Natural killer cell (primary cell): ENCODE measurements at regions of chr3 and their contacts with region 1.

Region 1: GRCh38 chr3:143182866-143183664 is 63.5 kb downstream of the CHST2 start:
- DNase-seq: no peak
- ATAC-seq: peak; percentile 60 to 72 (median 63)
- H3K4me3 ChIP-seq: no peak overlapping the region
- H3K4me3 Mint-ChIP-seq: peak overlapping the region; percentile 64
- H3K27ac ChIP-seq: peak overlapping the region; percentile 68
- H3K27ac Mint-ChIP-seq: no peak overlapping the region
- H3K4me1 ChIP-seq: peaks cover 11% of the 10 kb centered on the region
- H3K4me1 Mint-ChIP-seq: peaks cover 29 to 34% of the 10 kb centered on the region in 2 donors
- H3K27me3 ChIP-seq: no peaks in the 10 kb centered on the region
- H3K27me3 Mint-ChIP-seq: no peaks in the 10 kb centered on the region
- CTCF ChIP-seq: no peak

Region 2: DNA sequence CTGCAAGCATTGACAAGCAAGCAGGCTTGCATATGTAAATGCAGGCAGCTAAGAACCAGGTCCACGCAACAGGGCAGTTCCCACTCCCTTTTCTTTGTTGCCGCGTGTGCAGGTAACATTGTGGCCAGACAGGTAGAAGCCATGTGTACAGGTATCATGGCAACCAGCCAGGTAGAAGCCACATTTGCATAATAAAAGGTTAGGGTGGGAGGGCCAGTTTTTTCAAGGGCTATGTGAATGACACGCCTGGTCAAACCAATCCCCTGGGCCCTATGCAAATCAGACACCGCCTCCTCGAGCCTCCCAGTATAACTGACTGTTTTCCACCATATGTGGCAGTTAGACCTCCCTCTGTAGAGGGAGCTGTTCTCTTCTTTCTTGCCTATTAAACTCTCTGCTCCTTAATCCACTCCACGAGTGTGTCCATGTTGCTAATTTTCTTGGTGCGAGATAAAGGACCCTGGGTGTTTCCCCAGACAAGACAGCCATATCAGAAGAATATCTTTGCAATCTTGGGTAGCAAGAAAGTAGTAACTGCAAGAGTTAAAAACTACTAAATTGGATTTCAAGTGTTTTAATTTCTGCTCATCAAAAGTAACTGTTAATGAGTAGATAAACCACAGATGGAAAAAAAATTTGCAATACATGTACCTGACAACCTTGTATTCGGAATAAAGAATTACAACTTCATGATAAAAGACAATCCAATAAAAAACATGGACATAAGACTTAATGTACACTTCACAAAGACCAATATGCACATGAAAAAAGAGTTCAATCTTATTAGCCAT is 316.0 kb before region 1 on chr3:
- intact Hi-C with region 1: no loop called
- DNase-seq: no peak
- ATAC-seq: no peak
- H3K4me3 ChIP-seq: no peak overlapping the region
- H3K4me3 Mint-ChIP-seq: no peak overlapping the region
- H3K27ac ChIP-seq: no peak overlapping the region
- H3K27ac Mint-ChIP-seq: no peak overlapping the region
- H3K4me1 ChIP-seq: no peaks in the 10 kb centered on the region
- H3K4me1 Mint-ChIP-seq: peaks cover 0 to 7% of the 10 kb centered on the region in 2 donors
- H3K27me3 ChIP-seq: no peaks in the 10 kb centered on the region
- H3K27me3 Mint-ChIP-seq: peaks cover 13 to 20% of the 10 kb centered on the region in 2 donors
- CTCF ChIP-seq: no peak

Region 3: GRCh38 chr3:143127801-143128200 is 55.3 kb before region 1 on chr3:
- intact Hi-C with region 1: loop called (anchors 2 kb)
- DNase-seq: no peak
- ATAC-seq: no peak
- H3K4me3 ChIP-seq: no peak overlapping the region
- H3K4me3 Mint-ChIP-seq: no peak overlapping the region
- H3K27ac ChIP-seq: no peak overlapping the region
- H3K27ac Mint-ChIP-seq: peak overlapping the region; percentile 84 to 90
- H3K4me1 ChIP-seq: peaks cover 19% of the 10 kb centered on the region
- H3K4me1 Mint-ChIP-seq: peaks cover 90 to 93% of the 10 kb centered on the region in 2 donors
- H3K27me3 ChIP-seq: no peaks in the 10 kb centered on the region
- H3K27me3 Mint-ChIP-seq: no peaks in the 10 kb centered on the region
- CTCF ChIP-seq: no peak